ENCODE measurements at regions of chr2 and their contacts with region 1.

Region 1: DNA sequence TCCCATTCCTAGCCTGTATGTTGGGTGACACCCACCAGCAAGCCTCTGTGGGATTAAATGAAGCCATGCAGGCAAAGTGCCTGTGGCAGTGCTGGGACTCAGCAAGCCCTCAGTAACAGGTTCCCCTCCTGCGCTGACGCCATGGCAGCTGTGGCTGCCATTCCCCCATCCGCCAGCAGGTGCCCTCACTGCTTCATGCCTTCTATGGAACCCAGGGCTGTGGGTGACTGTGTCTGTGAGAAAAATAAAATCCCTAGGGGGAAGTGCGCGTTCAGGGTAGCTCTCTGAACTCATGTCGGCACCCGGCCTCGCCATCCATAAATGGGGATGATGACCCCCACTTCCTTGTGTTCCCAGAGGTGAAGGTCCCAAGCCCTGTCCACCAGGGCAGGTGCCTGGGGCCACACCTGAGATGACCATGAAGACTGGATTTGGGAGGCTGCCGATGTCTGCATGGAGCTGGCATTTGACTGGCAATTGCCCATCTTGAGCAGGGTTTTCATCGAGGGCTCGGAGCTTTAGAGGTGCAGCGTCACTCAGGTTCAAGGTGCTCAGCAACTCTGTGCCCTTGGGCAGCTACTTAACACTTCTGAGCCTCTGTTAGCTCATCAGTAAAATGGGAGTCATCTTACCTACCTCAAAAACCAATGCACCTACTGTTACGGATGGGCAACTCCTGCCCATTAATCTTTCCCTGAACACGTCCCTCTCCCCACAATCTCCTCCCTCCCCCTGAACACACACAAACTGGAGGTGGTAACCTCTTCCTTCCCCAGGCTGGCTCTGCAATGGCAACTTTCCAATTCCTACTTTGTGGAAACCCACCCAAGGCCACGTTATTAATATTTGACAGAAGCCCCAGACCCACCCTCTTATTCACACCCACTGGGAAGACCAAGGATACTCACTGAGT is 2.9 kb upstream of the MAL start:
- DNase-seq: peak; percentile 89
- H3K4me3 Mint-ChIP-seq: peak overlapping the region; percentile 78
- H3K27ac Mint-ChIP-seq: peak overlapping the region; percentile 84
- H3K4me1 Mint-ChIP-seq: peaks cover 56% of the 10 kb centered on the region
- H3K27me3 Mint-ChIP-seq: peaks cover 5% of the 10 kb centered on the region

Region 2: GRCh38 chr2:95053543-95053942 is 31.0 kb after region 1 on chr2:
- CTCF ChIA-PET with region 1: interaction called, 25 read pairs
- POLR2A ChIA-PET with region 1: interaction called, 19 read pairs
- DNase-seq: no peak
- H3K4me3 Mint-ChIP-seq: no peak overlapping the region
- H3K27ac Mint-ChIP-seq: no peak overlapping the region
- H3K4me1 Mint-ChIP-seq: peaks cover 48% of the 10 kb centered on the region
- H3K27me3 Mint-ChIP-seq: no peaks in the 10 kb centered on the region

Region 3: GRCh38 chr2:95069465-95069864 is 46.9 kb after region 1 on chr2:
- CTCF ChIA-PET with region 1: interaction called, 397 read pairs
- POLR2A ChIA-PET with region 1: interaction called, 432 read pairs
- DNase-seq: peak; percentile 11
- H3K4me3 Mint-ChIP-seq: no peak overlapping the region
- H3K27ac Mint-ChIP-seq: no peak overlapping the region
- H3K4me1 Mint-ChIP-seq: peaks cover 28% of the 10 kb centered on the region
- H3K27me3 Mint-ChIP-seq: peaks cover 4% of the 10 kb centered on the region

Region 4: GRCh38 chr2:95121407-95122196 is 99.0 kb after region 1 on chr2 and contains the start of gene MRPS5:
- CTCF ChIA-PET with region 1: interaction called, 226 read pairs
- POLR2A ChIA-PET with region 1: interaction called, 25 read pairs
- DNase-seq: peak; percentile 85
- H3K4me3 Mint-ChIP-seq: peak within 1 kb of the TSS; percentile 82
- H3K27ac Mint-ChIP-seq: peak within 1 kb of the TSS; percentile 89
- H3K4me1 Mint-ChIP-seq: peaks cover 42% of the 10 kb centered on the region
- H3K27me3 Mint-ChIP-seq: peaks cover 2% of the 10 kb centered on the region
- total RNA-seq, gene MRPS5: 66.3 to 68.2 TPM

Region 5: GRCh38 chr2:95165129-95166064 is 142.8 kb after region 1 on chr2 and contains the start of gene ZNF2:
- CTCF ChIA-PET with region 1: interaction called, 10 read pairs
- POLR2A ChIA-PET with region 1: interaction called, 12 read pairs
- DNase-seq: peak; percentile 97
- H3K4me3 Mint-ChIP-seq: peak within 1 kb of the TSS; percentile 100
- H3K27ac Mint-ChIP-seq: peak within 1 kb of the TSS; percentile 92
- H3K4me1 Mint-ChIP-seq: peaks cover 32% of the 10 kb centered on the region
- H3K27me3 Mint-ChIP-seq: no peaks in the 10 kb centered on the region
- total RNA-seq, gene ZNF2: 3.5 to 3.9 TPM

Measured in activated CD4-positive, alpha-beta memory T cell treated with anti-CD3 and anti-CD28 coated beads, Interleukin-2, amount 10 ng/mL, durations not matched to agents 7 days and 5 days (primary cell).